ENCODE measurements at regions of chr1 and their contacts with region 1.

Region 1: GRCh38 chr1:67561704-67562113 is 123.3 kb upstream of the GADD45A start:
- DNase-seq: peak; percentile 52 to 85 (median 75)
- ATAC-seq: peak; percentile 60 to 83 (median 77)
- H3K4me3 ChIP-seq: no peak overlapping the region
- H3K4me3 Mint-ChIP-seq: no peak overlapping the region
- H3K27ac ChIP-seq: no peak overlapping the region
- H3K27ac Mint-ChIP-seq: no peak overlapping the region
- H3K4me1 ChIP-seq: peaks cover 0 to 4% of the 10 kb centered on the region in 2 experiments
- H3K4me1 Mint-ChIP-seq: peaks cover 0 to 4% (median 3%) of the 10 kb centered on the region in 3 donors
- H3K27me3 ChIP-seq: peaks cover 0 to 29% of the 10 kb centered on the region in 2 experiments
- H3K27me3 Mint-ChIP-seq: peaks cover 11 to 15% of the 10 kb centered on the region in 2 donors

Region 2: DNA sequence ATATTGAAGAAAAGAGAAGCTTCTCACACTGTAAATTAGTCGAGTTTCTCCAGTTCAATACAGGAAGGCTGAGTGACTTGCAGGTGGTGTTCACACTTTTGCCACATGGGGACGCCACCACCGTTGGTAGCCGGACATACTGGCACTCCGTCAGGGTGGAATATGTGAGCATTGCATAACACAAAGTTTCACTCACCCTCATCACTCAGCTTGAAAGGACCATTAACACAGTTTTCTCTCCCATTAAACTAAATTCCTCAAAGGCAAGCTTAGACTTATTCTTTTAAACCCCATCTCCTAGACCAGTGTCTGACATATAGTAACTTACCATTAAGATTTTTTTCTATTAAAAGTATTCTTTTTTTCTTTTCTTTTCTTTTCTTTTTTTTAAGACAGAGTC is 26.2 kb before region 1 on chr1:
- CTCF ChIA-PET with region 1: interaction called, 3 to 10 read pairs
- POLR2A ChIA-PET with region 1: no interaction called
- DNase-seq: peak in 26 of 35 experiments; percentile 4 to 46 (median 14)
- ATAC-seq: no peak
- H3K4me3 ChIP-seq: no peak overlapping the region
- H3K4me3 Mint-ChIP-seq: no peak overlapping the region
- H3K27ac ChIP-seq: no peak overlapping the region
- H3K27ac Mint-ChIP-seq: no peak overlapping the region
- H3K4me1 ChIP-seq: no peaks in the 10 kb centered on the region
- H3K4me1 Mint-ChIP-seq: no peaks in the 10 kb centered on the region
- H3K27me3 ChIP-seq: peaks cover 0 to 3% of the 10 kb centered on the region in 2 experiments
- H3K27me3 Mint-ChIP-seq: no peaks in the 10 kb centered on the region

Region 3: GRCh38 chr1:67691712-67692111 is 130.0 kb after region 1 on chr1:
- CTCF ChIA-PET with region 1: no interaction called
- POLR2A ChIA-PET with region 1: interaction called in 1 of 2 experiments, 10 read pairs
- DNase-seq: no peak
- ATAC-seq: no peak
- H3K4me3 ChIP-seq: no peak overlapping the region
- H3K4me3 Mint-ChIP-seq: no peak overlapping the region
- H3K27ac ChIP-seq: no peak overlapping the region
- H3K27ac Mint-ChIP-seq: no peak overlapping the region
- H3K4me1 ChIP-seq: peaks cover 0 to 1% of the 10 kb centered on the region in 2 experiments
- H3K4me1 Mint-ChIP-seq: peaks cover 5 to 9% (median 6%) of the 10 kb centered on the region in 3 donors
- H3K27me3 ChIP-seq: no peaks in the 10 kb centered on the region
- H3K27me3 Mint-ChIP-seq: no peaks in the 10 kb centered on the region

Region 4: GRCh38 chr1:67760030-67760821 is 198.5 kb after region 1 on chr1:
- CTCF ChIA-PET with region 1: interaction called, 43 to 73 read pairs
- POLR2A ChIA-PET with region 1: no interaction called
- DNase-seq: peak in 31 of 35 experiments; percentile 14 to 76 (median 47)
- ATAC-seq: peak; percentile 51 to 59 (median 54)
- H3K4me3 ChIP-seq: no peak overlapping the region
- H3K4me3 Mint-ChIP-seq: no peak overlapping the region
- H3K27ac ChIP-seq: no peak overlapping the region
- H3K27ac Mint-ChIP-seq: no peak overlapping the region
- H3K4me1 ChIP-seq: no peaks in the 10 kb centered on the region
- H3K4me1 Mint-ChIP-seq: no peaks in the 10 kb centered on the region
- H3K27me3 ChIP-seq: peaks cover 0 to 2% of the 10 kb centered on the region in 2 experiments
- H3K27me3 Mint-ChIP-seq: peaks cover 20 to 22% of the 10 kb centered on the region in 2 donors

Region 5: GRCh38 chr1:67766141-67766978 is 204.7 kb after region 1 on chr1:
- CTCF ChIA-PET with region 1: interaction called, 43 to 73 read pairs
- POLR2A ChIA-PET with region 1: no interaction called
- DNase-seq: peak in 23 of 35 experiments; percentile 4 to 58 (median 17)
- ATAC-seq: peak in 3 of 4 experiments; percentile 49 to 65 (median 50)
- H3K4me3 ChIP-seq: peak overlapping the region; percentile 7 to 60
- H3K4me3 Mint-ChIP-seq: peak overlapping the region; percentile 23 to 61 (median 57)
- H3K27ac ChIP-seq: no peak overlapping the region
- H3K27ac Mint-ChIP-seq: no peak overlapping the region
- H3K4me1 ChIP-seq: peaks cover 2 to 9% of the 10 kb centered on the region in 2 experiments
- H3K4me1 Mint-ChIP-seq: peaks cover 6 to 10% (median 6%) of the 10 kb centered on the region in 3 donors
- H3K27me3 ChIP-seq: peaks cover 2 to 14% of the 10 kb centered on the region in 2 experiments
- H3K27me3 Mint-ChIP-seq: peaks cover 34 to 49% of the 10 kb centered on the region in 2 donors